Adrenal gland (tissue), 19 donors: ENCODE measurements at regions of chr20 and their contacts with region 1.

Region 1: DNA sequence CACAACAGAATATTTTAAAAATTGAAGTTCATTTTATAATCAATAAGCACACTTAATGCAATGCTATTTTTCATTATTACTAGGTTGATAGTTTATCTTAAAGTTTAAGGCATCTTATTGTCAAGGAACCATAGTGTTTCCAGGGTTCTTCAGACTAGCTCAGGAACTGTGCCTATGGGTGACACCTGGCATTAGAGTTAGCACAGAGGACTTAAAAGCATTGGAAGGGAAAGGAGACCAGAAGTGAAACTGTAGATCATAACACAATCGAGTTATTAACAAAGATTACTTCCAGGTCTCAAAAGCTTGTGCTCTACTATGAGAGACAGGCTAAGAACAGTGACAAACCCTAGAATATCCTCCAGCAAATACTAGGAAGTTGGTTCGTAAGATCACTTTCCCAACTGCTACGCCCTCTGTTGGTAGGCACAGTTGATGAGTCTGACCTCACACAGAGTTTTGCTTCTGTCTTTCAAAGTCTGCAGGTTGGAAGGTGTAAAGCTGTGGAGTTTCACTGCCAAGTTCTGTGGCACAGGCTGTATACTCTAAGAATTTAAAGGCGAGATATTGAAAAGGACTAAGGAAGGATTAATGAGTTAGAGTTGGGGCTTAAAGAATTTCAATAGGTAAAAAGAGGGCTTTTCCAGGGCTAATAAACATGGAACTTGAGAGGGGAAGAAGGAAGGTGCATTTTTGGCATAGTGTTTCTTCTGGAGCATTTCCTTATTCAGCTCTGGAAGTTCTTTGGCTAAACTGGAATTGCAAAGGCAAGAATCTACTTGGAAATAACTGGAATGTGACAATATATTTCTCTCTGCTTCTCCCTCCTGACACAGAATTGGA is 531.3 kb upstream of the JAG1 start:
- DNase-seq: peak; percentile 22 to 74 (median 54)
- H3K4me3 ChIP-seq: no peak overlapping the region
- H3K27ac ChIP-seq: no peak overlapping the region
- H3K4me1 ChIP-seq: no peaks in the 10 kb centered on the region
- H3K27me3 ChIP-seq: no peaks in the 10 kb centered on the region
- CTCF ChIP-seq: peak; percentile 57 to 70 (median 62)
- POLR2A ChIP-seq: no peak

Region 2: DNA sequence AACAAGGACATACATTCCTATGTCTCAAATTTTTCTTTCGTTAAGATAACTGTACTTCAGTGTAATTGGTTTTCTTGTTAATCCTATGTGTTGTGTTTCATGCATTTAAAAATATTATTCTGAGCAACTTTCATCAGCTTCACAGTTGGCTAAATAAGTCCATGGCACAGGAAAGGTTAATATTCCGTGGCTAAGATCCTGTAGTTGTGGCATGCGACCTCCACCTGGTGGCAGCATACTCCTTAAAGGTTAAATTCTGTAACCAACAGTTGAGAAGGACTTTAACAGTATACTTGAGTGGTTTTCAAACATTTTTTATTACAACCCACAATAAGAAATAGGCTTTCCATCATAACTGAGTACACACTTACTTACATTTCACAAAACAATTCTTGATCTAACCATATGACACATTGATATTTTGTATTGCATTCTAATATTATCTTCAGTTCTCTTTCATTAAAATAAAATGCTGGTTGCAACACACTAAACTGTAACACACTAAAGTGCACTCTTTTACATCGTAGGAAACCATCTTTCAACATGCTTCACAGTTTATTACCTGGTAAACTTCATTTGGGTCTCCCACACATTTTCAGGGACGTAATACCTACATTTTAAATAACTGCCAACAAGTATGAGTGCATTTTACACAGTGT is 651.7 kb before region 1 on chr20:
- intact Hi-C with region 1: loop called in 1 of 2 experiments (anchors 10 kb)
- DNase-seq: peak; percentile 49 to 91 (median 75)
- H3K4me3 ChIP-seq: no peak overlapping the region
- H3K27ac ChIP-seq: no peak overlapping the region
- H3K4me1 ChIP-seq: no peaks in the 10 kb centered on the region
- H3K27me3 ChIP-seq: no peaks in the 10 kb centered on the region
- CTCF ChIP-seq: peak; percentile 70 to 81 (median 80)
- POLR2A ChIP-seq: no peak

Region 3: DNA sequence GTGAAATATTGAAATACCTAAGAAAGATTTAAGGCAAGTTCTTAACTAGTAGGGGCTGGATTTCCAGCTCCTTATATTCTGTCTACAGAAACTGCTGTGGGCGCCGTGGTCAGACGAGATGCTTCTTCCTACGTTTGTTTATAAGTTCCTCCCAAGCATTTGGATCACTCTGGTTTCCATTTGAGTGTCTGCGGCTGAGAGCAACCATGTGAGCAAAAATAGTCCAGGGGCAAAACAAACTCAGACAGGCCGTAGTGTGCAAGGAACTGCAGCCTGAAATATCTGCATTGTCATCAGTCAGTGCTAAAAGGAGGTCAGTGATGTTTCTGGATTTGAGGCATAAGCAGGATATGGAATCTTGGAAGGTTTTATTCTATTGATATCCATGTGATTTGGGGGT is 45.4 kb before region 1 on chr20:
- intact Hi-C with region 1: no loop called
- DNase-seq: peak in 1 of 7 donors; percentile 55
- H3K4me3 ChIP-seq: no peak overlapping the region
- H3K27ac ChIP-seq: peak overlapping the region in 1 of 5 donors; percentile 12
- H3K4me1 ChIP-seq: no peaks in the 10 kb centered on the region
- H3K27me3 ChIP-seq: no peaks in the 10 kb centered on the region
- CTCF ChIP-seq: no peak
- POLR2A ChIP-seq: no peak